CD4-positive, alpha-beta T cell (primary cell): ENCODE measurements at regions of chr14 and their contacts with region 1.

Region 1: GRCh38 chr14:105480952-105481801 is 5.5 kb upstream of the CRIP1 start:
- DNase-seq: peak; percentile 84 to 96 (median 91)
- ATAC-seq: peak; percentile 42
- H3K4me3 ChIP-seq: peak overlapping the region; percentile 61
- H3K4me3 Mint-ChIP-seq: peak overlapping the region; percentile 90
- H3K27ac ChIP-seq: peak overlapping the region; percentile 100
- H3K27ac Mint-ChIP-seq: peak overlapping the region; percentile 97
- H3K4me1 ChIP-seq: peaks cover 95% of the 10 kb centered on the region
- H3K4me1 Mint-ChIP-seq: peaks cover 65% of the 10 kb centered on the region
- H3K27me3 ChIP-seq: peaks cover 0 to under 1% of the 10 kb centered on the region in 2 experiments
- H3K27me3 Mint-ChIP-seq: no peaks in the 10 kb centered on the region
- CTCF ChIP-seq: peak; percentile 98

Region 2: GRCh38 chr14:105369653-105370040 is 111.5 kb before region 1 on chr14:
- CTCF ChIA-PET with region 1: interaction called, 19 read pairs
- POLR2A ChIA-PET with region 1: interaction called, 3 read pairs
- intact Hi-C with region 1: no loop called
- DNase-seq: no peak
- ATAC-seq: no peak
- H3K4me3 ChIP-seq: no peak overlapping the region
- H3K4me3 Mint-ChIP-seq: no peak overlapping the region
- H3K27ac ChIP-seq: no peak overlapping the region
- H3K27ac Mint-ChIP-seq: no peak overlapping the region
- H3K4me1 ChIP-seq: peaks cover 11% of the 10 kb centered on the region
- H3K4me1 Mint-ChIP-seq: peaks cover 6% of the 10 kb centered on the region
- H3K27me3 ChIP-seq: no peaks in the 10 kb centered on the region
- H3K27me3 Mint-ChIP-seq: no peaks in the 10 kb centered on the region
- CTCF ChIP-seq: no peak

Region 3: DNA sequence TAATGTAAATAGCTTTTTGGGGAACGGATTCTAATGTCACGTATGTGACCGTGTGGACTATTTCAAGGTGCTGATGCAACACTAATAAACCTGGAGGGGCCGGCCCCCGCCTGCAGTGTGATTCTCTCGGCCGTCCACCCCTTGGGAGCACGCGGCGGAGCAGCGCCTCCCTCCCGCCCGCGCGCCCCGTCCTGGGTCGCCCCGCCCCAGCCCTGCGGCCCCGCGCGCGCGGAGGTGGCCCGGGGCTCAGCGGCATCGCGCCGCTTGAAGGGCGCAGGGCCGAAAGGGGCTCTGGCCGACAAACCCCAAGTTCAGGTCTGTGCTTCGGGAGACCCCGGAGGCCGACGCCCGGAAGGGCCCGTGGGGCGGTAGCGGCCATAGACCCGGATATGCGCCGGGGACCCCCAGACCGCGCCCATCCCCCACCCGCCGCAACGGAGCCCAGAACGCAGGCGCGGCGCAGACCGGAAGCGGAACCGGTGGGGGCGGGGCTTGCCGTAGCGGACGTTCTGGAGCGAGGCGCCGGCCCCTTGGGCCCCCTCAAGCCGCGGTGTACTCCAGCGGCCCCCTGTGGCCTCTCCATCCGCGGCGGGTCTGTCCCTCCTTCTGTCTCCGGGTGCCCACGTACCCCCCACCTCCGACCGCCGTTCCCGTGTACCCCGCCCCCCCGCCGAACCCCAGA is 83.0 kb before region 1 on chr14 and contains the start of gene TEX22:
- CTCF ChIA-PET with region 1: no interaction called
- POLR2A ChIA-PET with region 1: interaction called, 6 read pairs
- intact Hi-C with region 1: loop called in 1 of 2 experiments (anchors 2 kb)
- DNase-seq: peak; percentile 75 to 94 (median 86)
- ATAC-seq: peak; percentile 91
- H3K4me3 ChIP-seq: peak within 1 kb of the TSS; percentile 71
- H3K4me3 Mint-ChIP-seq: peak within 1 kb of the TSS; percentile 80
- H3K27ac ChIP-seq: peak within 1 kb of the TSS; percentile 44 to 65
- H3K27ac Mint-ChIP-seq: peak within 1 kb of the TSS; percentile 72
- H3K4me1 ChIP-seq: peaks cover 30% of the 10 kb centered on the region
- H3K4me1 Mint-ChIP-seq: peaks cover 16% of the 10 kb centered on the region
- H3K27me3 ChIP-seq: no peaks in the 10 kb centered on the region
- H3K27me3 Mint-ChIP-seq: no peaks in the 10 kb centered on the region
- CTCF ChIP-seq: no peak
- total RNA-seq, gene TEX22: 1.3 to 2.8 TPM

Region 4: DNA sequence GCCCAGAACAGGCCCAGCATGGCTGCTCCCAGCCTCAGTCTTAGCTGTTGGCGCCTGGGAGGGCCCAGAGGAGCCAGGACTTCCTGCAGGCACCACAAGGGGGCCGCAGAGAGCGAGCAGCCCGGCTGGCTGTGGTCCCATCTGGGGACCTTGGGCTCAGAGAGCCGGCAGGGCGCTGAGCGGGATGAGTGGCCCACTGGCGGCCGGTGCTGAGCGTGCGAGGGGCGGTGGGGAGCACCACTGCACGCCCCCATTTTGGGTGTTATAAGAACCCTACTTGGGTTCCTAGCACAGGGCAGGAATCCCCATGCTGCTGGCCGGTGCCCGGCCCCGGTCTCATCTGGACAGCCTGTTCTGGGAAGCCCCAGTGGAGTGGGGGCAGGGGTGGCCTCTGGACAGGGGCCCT is 32.5 kb before region 1 on chr14:
- CTCF ChIA-PET with region 1: interaction called, 14 read pairs
- POLR2A ChIA-PET with region 1: no interaction called
- intact Hi-C with region 1: no loop called
- DNase-seq: peak; percentile 55 to 82 (median 65)
- ATAC-seq: peak; percentile 100
- H3K4me3 ChIP-seq: no peak overlapping the region
- H3K4me3 Mint-ChIP-seq: no peak overlapping the region
- H3K27ac ChIP-seq: no peak overlapping the region
- H3K27ac Mint-ChIP-seq: no peak overlapping the region
- H3K4me1 ChIP-seq: peaks cover 7% of the 10 kb centered on the region
- H3K4me1 Mint-ChIP-seq: no peaks in the 10 kb centered on the region
- H3K27me3 ChIP-seq: no peaks in the 10 kb centered on the region
- H3K27me3 Mint-ChIP-seq: no peaks in the 10 kb centered on the region
- CTCF ChIP-seq: peak; percentile 75

Region 5: DNA sequence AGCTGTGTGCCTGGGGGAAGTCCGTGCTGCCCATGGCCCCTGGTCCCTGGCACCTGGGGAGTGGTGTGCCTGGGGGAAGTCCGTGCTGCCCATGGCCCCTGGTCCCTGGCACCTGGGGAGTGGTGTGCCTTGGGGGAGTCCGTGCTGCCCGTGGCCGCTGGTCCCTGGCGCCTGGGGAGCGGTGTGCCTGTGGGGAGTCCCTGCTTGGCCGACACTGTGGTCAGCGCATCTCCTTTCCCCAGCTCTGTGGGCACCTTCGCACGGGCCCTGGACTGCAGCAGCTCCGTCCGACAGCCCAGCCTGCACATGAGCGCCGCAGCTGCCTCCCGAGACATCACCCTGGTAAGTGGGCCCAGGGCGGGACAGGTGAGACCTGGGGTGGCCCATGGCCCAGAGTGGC is 21.1 kb before region 1 on chr14:
- CTCF ChIA-PET with region 1: no interaction called
- POLR2A ChIA-PET with region 1: no interaction called
- intact Hi-C with region 1: no loop called
- DNase-seq: no peak
- ATAC-seq: no peak
- H3K4me3 ChIP-seq: no peak overlapping the region
- H3K4me3 Mint-ChIP-seq: no peak overlapping the region
- H3K27ac ChIP-seq: no peak overlapping the region
- H3K27ac Mint-ChIP-seq: no peak overlapping the region
- H3K4me1 ChIP-seq: no peaks in the 10 kb centered on the region
- H3K4me1 Mint-ChIP-seq: no peaks in the 10 kb centered on the region
- H3K27me3 ChIP-seq: no peaks in the 10 kb centered on the region
- H3K27me3 Mint-ChIP-seq: no peaks in the 10 kb centered on the region
- CTCF ChIP-seq: no peak